Activated naive CD8-positive, alpha-beta T cell treated with anti-CD3 and anti-CD28 coated beads, Interleukin-2, amount 10 ng/mL, durations not matched to agents 7 days and 5 days (primary cell): ENCODE measurements at regions of chr5 and their contacts with region 1.

Region 1: GRCh38 chr5:181260387-181261319 is at the start of gene TRIM52:
- DNase-seq: peak; percentile 91
- ATAC-seq: peak; percentile 86
- H3K4me3 Mint-ChIP-seq: peak within 1 kb of the TSS; percentile 97
- H3K27ac Mint-ChIP-seq: peak within 1 kb of the TSS; percentile 93
- H3K4me1 Mint-ChIP-seq: peaks cover 38% of the 10 kb centered on the region
- H3K27me3 Mint-ChIP-seq: no peaks in the 10 kb centered on the region
- total RNA-seq, gene TRIM52: 43.0 to 43.5 TPM

Region 2: DNA sequence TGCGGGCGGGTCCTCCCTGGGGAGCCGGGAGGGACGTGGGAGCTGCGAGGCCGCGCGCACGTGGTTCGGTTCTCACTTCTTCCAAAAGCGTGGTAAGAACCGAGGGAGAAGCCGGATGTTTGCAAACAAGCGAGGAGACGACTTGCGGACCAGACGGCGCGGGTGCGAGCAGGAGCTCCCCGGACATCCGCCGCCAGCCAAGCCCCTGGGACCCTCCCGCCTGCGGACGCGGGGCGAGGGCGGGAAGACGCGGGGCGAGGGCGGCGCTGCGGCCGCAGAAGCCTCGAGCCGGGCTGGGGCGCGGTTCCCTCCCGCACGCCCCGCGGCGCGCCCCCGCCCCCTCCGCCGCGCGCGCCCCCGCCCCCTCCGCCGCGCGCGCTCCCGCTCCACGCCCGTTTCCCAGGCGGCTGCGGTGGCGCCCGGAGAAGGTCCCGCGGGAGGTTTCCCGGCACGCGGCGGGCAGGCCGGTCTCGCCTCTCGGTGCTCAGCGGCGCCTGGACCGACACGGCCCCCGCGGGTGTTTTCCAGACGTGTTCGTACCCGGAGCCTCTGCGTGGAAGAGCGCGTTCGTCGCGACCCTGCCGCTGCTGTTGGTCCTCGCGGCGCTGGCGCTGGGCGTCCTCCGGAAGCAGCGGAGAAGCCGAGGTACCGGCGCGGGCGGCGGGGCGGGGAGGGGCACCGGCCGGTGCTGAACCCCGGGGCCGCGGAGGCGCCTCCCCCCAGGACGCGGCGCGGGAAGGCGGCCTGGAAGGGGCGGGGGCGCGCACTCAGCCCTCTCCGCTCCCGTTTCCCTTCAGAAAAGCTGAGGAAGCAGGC is 207.8 kb before region 1 on chr5:
- POLR2A ChIA-PET with region 1: no interaction called
- DNase-seq: peak; percentile 60
- ATAC-seq: peak; percentile 48
- H3K4me3 Mint-ChIP-seq: peak overlapping the region; percentile 72
- H3K27ac Mint-ChIP-seq: no peak overlapping the region
- H3K4me1 Mint-ChIP-seq: peaks cover 12% of the 10 kb centered on the region
- H3K27me3 Mint-ChIP-seq: peaks cover 76% of the 10 kb centered on the region

Region 3: DNA sequence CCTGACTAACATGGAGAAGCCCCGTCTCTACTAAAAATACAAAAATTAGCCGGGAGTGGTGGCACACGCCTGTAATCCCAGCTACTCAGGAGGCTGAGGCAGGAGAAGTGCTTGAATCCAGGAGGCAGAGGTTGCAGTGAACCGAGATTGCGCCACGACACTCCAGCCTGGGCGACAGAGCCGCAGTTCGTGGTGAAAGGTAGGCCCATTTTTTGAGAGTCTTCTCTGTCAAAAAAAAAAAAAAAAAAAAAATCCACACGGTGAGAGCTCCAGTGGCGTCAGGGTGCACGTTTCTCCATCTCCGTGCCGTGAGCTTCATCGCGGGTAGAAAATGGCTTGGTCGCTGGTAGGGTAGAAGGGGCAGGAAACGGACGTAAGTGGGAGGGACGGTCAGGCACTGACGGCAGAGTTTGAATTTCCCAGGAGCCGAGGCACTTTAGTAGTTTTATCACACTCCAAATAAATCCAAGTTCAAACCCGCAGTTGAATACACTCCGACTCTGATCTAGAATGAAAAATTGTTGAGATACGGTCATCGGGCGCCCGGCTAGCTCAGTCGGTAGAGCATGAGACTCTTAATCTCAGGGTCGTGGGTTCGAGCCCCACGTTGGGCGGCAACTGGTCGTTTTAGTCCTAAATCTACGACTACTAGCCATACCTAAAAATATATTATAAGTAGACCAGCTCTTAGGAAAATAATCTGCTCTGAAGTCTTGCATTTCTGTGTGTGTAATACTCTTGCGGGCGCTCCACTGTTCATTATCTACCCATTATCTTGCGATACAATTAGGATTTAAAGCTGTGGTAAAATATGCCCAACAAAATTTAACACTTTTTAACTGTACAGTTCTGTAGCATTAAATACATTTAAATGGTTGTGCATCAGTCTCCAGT is 53.2 kb before region 1 on chr5:
- POLR2A ChIA-PET with region 1: interaction called, 17 read pairs
- DNase-seq: peak; percentile 77
- ATAC-seq: peak; percentile 58
- H3K4me3 Mint-ChIP-seq: peak overlapping the region; percentile 86
- H3K27ac Mint-ChIP-seq: peak overlapping the region; percentile 87
- H3K4me1 Mint-ChIP-seq: peaks cover 29% of the 10 kb centered on the region
- H3K27me3 Mint-ChIP-seq: peaks cover 27% of the 10 kb centered on the region

Region 4: DNA sequence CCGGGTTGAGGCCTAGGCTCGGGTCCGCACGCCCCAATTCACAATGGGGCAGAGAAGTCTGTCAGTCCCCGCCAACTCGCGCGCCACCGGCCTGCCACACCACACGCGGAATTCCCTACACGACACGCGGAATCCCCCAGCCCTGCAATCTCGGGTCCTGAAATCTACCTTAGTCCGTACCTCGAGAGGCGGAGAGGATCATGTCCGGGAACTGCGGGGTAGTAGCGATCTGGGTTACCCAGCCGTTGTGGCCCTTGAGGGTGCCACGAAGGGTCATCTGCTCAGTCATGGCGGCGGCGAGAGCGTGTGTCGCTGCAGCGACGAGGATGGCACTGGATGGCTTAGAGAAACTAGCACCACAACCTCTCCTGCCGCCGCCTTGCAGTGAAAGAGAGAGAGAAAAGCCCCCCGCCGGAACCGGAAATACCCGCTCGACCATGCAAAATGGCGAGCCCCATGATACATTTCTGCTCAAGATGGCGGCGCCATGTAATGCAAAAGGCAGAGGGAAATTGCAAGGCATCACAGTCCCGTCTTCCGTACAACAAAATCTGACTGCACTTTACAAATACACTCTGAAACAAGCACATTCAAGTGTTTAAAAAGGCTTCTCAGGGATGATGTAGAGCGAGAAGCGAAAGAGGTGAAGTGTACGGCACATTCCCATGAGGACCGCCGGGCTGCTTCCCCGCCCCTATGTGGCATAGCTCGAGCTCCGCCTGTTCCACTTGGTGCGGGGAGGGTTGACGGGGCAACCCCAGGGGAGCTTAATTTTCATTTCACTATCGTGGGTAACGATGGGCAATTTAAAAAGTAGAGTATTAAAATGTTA is 16.9 kb before region 1 on chr5 and contains the start of gene RACK1:
- POLR2A ChIA-PET with region 1: interaction called, 202 read pairs
- DNase-seq: peak; percentile 84
- ATAC-seq: peak; percentile 68
- H3K4me3 Mint-ChIP-seq: peak within 1 kb of the TSS; percentile 95
- H3K27ac Mint-ChIP-seq: peak within 1 kb of the TSS; percentile 92
- H3K4me1 Mint-ChIP-seq: peaks cover 39% of the 10 kb centered on the region
- H3K27me3 Mint-ChIP-seq: no peaks in the 10 kb centered on the region
- total RNA-seq, gene RACK1: 1,741 to 1,808 TPM

Region 5: GRCh38 chr5:181271081-181271480 is 10.4 kb after region 1 on chr5:
- POLR2A ChIA-PET with region 1: no interaction called
- DNase-seq: no peak
- ATAC-seq: no peak
- H3K4me3 Mint-ChIP-seq: no peak overlapping the region
- H3K27ac Mint-ChIP-seq: no peak overlapping the region
- H3K4me1 Mint-ChIP-seq: no peaks in the 10 kb centered on the region
- H3K27me3 Mint-ChIP-seq: no peaks in the 10 kb centered on the region